Heart right ventricle (tissue), 16 donors: ENCODE measurements at regions of chr20 and their contacts with region 1.

Region 1: DNA sequence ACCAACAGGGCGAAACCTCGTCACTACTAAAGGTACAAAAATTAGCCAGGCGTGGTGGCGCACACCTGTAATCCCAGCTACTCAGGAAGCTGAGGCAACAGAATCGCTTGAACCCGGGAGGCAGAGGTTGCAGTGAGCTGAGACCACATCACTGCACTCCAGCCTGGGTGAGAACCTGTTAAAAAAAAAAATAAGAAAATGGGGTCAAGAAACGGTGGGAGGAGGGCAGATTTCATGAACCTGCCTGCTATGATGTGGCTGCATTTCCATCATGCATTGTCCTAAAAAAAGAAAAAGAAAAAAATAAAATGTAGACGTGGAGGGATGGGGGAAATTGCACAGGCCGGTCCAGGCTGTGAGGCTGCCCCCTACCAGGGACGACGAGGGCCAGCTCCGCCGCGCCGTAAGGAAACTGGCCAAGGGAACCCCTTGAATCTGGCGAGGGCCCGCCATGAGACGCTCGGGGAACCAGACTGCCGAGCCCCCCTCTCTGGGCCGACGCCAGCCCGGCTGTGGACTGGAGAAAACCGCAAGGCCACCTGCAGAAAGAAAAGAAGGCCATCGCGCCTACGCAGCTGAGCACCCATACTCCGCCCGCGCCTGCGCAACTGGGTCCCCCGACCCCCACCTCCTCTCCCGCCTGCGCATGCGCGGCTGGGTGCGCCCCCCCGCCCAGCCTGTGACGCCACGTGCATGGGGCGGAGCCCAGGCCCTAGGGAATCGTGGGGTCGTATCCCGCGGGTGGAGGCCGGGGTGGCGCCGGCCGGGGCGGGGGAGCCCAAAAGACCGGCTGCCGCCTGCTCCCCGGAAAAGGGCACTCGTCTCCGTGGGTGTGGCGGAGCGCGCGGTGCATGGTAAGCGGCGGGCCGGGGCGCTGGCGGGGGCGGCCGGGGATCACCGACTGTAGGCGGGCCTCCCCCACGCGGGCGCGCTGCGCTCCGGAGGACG is at the start of gene ENTPD6:
- DNase-seq: peak; percentile 92 to 97
- ATAC-seq: peak; percentile 83 to 93 (median 92)
- H3K4me3 ChIP-seq: peak within 1 kb of the TSS; percentile 75 to 99 (median 92)
- H3K27ac ChIP-seq: peak within 1 kb of the TSS; percentile 84 to 97 (median 93)
- H3K4me1 ChIP-seq: peaks cover 15 to 72% (median 51%) of the 10 kb centered on the region in 9 donors
- H3K27me3 ChIP-seq: no peaks in the 10 kb centered on the region
- CTCF ChIP-seq: peak in 5 of 9 donors; percentile 13 to 51 (median 36)
- total RNA-seq, gene ENTPD6: 54.6 to 141 (median 78.0) TPM

Region 2: GRCh38 chr20:25220021-25220730 is 24.9 kb after region 1 on chr20:
- intact Hi-C with region 1: no loop called
- DNase-seq: no peak
- ATAC-seq: peak in 1 of 8 donors; percentile 11
- H3K4me3 ChIP-seq: no peak overlapping the region
- H3K27ac ChIP-seq: peak overlapping the region in 9 of 10 donors; percentile 3 to 94 (median 69)
- H3K4me1 ChIP-seq: peaks cover 18 to 83% (median 54%) of the 10 kb centered on the region in 9 donors
- H3K27me3 ChIP-seq: no peaks in the 10 kb centered on the region
- CTCF ChIP-seq: peak in 6 of 9 donors; percentile 7 to 33 (median 25)

Region 3: GRCh38 chr20:25233016-25233820 is 37.9 kb after region 1 on chr20:
- intact Hi-C with region 1: loop called in 1 of 10 experiments (anchors 5 kb)
- DNase-seq: peak; percentile 59
- ATAC-seq: peak in 7 of 8 donors; percentile 10 to 54 (median 48)
- H3K4me3 ChIP-seq: no peak overlapping the region
- H3K27ac ChIP-seq: peak overlapping the region in 7 of 10 donors; percentile 21 to 68 (median 39)
- H3K4me1 ChIP-seq: peaks cover 2 to 58% (median 31%) of the 10 kb centered on the region in 9 donors
- H3K27me3 ChIP-seq: no peaks in the 10 kb centered on the region
- CTCF ChIP-seq: no peak